GM18951 (cell line): ENCODE measurements at regions of chr16 and their contacts with region 1.

Region 1: DNA sequence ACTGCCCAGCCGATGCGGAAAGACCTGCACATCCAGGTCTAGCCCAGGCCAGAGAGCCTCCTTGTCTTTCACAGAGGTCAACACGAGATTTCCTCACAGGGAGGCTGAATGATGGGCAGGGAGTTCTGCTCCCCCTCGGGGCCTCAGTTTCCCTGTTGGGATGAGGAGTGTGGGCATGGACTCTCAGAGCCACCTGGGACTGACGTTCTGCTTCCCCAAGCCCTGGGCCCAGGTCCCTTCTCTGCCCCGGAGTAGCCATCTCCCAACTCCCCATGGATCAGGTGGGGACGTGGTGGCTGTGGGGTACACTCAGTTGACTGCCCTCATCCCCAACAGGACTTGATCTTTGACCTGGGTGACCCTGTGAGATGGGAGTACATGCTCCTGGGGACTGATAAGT is 17.6 kb upstream of the KATNB1 start:
- POLR2A ChIP-seq: no peak

Region 2: DNA sequence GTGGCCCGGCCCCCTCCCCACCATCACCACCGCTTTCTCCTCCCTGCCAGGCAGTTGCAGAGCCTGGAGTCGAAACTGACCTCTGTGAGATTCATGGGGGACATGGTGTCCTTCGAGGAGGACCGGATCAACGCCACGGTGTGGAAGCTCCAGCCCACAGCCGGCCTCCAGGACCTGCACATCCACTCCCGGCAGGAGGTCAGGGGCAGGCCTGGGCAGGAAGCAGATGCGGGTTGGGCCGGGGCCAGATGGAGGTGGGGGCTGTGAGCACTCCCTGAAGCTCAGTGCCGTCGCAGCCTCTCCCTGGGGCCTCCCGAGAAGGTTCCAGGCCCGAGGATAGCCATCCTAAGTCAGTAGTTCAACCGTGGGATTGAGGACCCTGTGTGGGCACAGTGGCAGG is 64.1 kb before region 1 on chr16:
- in situ Hi-C with region 1: loop called (anchors 5 kb)
- POLR2A ChIP-seq: no peak